ENCODE measurements at regions of chr2 and their contacts with region 1.

Region 1: DNA sequence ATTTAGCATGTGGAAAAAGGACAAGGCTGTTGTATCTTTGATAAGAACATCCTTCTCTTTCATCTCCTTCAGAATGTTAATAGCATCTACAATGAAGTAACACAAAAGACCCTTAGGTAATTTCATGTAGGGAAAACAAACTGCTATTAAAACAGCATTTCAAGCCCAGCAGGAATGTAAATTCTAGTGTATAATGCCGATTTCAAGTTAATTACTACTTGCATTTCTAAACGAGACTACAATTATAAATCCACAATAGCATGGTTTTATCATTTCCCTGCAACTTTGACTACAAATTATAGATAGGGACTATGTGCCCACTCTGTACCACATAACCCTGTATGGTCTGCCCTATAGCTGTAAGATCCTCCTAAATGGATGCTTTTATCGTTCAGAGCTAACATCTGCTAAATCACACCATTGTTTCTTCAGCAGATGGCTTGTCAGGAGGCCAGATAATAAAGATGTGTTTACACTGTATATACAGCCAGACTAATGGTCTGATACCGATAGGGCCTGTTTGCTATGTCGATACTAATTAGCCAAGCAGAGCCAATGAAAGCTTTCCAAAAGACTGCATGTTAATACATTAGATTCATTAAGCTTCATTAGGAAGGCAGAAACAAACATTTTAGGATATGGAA is 51.9 kb downstream of the LRPPRC start:
- DNase-seq: no peak

Region 2: GRCh38 chr2:43637030-43637803 is 306.7 kb before region 1 on chr2 and contains the start of gene PLEKHH2:
- in situ Hi-C with region 1: loop called (anchors 25 kb)
- DNase-seq: peak; percentile 91
- total RNA-seq, gene PLEKHH2: 7.5 and 8.0 TPM in 2 replicates

Measured in Caki2 (cell line).